Right ventricle myocardium superior (tissue), 1 donor: ENCODE measurements at regions of chr22 and their contacts with region 1.

Region 1: GRCh38 chr22:30386960-30387827 is at the start of gene RNF215:
- DNase-seq: peak; percentile 90
- ATAC-seq: peak; percentile 97
- total RNA-seq, gene RNF215: 4.3 TPM

Region 2: DNA sequence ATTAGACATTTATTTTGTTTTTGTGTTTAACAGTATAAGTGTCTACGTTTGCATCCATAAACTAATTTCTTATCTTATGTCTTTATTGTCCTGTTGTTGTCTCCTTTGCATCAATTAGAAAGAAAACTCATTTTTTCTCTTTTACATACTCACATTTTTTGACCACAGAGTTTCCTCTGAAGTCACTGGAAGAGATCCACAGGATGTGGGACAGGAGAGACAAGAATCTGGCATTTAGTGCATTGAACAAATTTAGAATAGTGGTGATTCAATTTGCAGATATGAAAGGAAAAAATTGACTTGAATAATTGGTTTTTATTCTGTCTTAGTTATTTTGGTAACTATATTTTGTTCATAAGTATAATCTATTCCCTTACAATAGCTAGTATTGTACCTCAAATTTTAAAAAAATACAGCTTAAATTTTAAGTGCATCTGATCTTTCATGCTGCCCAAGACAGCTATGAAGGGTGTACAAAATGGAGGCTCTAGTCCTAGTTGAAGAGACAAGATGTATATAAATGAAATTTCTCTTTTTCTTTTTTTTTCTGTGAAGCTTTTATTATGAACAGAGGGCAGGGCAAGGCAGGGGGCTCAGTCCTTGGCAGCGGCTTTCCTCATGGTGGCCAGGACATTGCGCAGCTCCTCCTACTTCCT is 282.6 kb before region 1 on chr22:
- intact Hi-C with region 1: loop called (anchors 5 kb)
- DNase-seq: no peak
- ATAC-seq: no peak

Region 3: DNA sequence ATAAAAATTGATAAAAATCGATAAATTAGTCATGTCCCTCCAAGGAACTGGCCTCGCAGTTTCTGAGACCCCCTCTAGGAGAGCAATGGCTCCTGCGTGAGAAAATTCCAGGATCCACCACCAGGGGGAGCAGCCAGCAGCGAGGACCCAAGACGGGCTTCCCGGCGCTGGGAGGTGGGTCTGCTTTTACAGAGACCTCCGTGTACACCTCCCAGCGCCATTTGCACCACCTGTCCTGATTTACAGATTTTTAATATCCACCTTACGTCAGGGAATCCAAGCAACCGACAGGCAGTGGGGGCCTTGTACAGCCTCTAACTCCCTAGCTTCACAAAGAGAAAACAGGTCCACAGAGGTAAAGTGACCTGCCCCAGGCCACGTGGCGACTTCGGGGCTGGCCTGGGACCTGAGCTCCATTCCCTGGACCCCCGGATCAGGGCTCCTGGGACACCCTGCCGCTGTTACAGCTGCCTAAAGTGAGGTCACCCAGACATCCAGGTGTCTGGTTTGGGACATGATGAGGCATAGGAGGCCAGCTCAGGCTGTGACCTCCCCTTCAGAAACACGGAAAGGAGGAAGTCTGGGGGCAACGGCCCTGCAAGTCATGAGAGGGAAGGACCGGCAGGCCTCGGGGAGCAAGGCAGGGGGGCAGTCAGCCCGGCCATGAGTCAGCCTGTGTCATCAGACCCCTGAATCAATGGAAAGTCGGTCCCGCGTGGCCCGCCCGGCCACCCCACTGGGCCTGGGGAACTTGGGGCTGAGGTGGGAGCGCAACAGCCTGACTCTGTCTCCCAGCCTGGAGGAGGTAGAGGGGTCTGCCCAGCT is 124.1 kb before region 1 on chr22:
- intact Hi-C with region 1: loop called (anchors 5 kb)
- DNase-seq: peak; percentile 85
- ATAC-seq: peak; percentile 75

Region 4: GRCh38 chr22:30289134-30289979 is 97.8 kb before region 1 on chr22 and contains the start of gene CASTOR1:
- intact Hi-C with region 1: loop called (anchors 1 kb)
- DNase-seq: peak; percentile 99
- ATAC-seq: peak; percentile 89
- total RNA-seq, gene CASTOR1: 5.3 TPM

Region 5: GRCh38 chr22:30486661-30487115 is 99.5 kb after region 1 on chr22:
- intact Hi-C with region 1: loop called (anchors 2 kb)
- DNase-seq: no peak
- ATAC-seq: no peak